Activated CD8-positive, alpha-beta memory T cell treated with anti-CD3 and anti-CD28 coated beads, Interleukin-2, amount 10 ng/mL, durations not matched to agents 7 days and 5 days (primary cell): ENCODE measurements at regions of chr16 and their contacts with region 1.

Region 1: DNA sequence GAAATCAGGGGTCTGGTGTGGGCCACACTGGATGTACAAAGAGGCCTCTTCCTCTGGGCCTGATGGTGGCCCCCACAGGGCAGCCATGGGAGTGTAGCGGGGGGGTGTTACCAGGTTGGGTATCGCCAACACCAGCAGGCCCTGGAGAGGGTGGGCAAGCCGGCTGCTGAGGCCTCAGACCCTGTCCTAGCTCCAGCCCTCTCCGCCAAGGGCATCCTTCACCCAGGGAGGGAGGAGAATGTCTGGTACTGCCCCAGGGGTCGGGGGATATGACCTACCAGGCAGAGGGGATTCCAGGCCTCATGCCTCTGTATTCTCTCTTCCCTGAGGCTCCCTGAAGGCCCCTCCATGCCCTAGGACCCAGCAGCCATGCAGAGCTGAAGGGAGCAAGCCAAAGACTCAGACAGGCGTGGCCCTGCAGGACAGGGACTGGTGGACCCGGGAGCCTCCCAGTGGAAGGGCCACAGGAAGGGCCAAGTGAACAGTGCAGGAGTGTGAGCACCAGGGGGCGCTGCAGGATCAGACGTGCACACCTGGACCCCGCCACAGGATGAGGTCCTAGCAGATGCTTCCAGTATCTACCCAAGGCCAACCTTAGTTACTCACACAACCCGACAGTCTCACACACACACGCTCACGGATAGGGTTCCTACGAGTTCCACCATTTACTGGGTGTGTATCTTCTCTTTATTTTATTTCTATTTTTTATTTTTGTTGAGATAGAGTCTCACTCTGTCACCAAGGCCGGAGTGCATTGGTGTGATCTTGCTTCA is 10.9 kb upstream of the CES4A start:
- DNase-seq: peak; percentile 93
- ATAC-seq: peak; percentile 99
- H3K4me3 Mint-ChIP-seq: no peak overlapping the region
- H3K27ac Mint-ChIP-seq: peak overlapping the region; percentile 75
- H3K4me1 Mint-ChIP-seq: peaks cover 57% of the 10 kb centered on the region
- H3K27me3 Mint-ChIP-seq: no peaks in the 10 kb centered on the region

Region 2: GRCh38 chr16:66774981-66775380 is 202.5 kb before region 1 on chr16:
- CTCF ChIA-PET with region 1: no interaction called
- DNase-seq: no peak
- ATAC-seq: no peak
- H3K4me3 Mint-ChIP-seq: no peak overlapping the region
- H3K27ac Mint-ChIP-seq: no peak overlapping the region
- H3K4me1 Mint-ChIP-seq: no peaks in the 10 kb centered on the region
- H3K27me3 Mint-ChIP-seq: no peaks in the 10 kb centered on the region

Region 3: GRCh38 chr16:66961065-66961744 is 16.3 kb before region 1 on chr16 and contains the start of gene CES3:
- CTCF ChIA-PET with region 1: interaction called, 86 read pairs
- DNase-seq: peak; percentile 84
- ATAC-seq: peak; percentile 96
- H3K4me3 Mint-ChIP-seq: peak within 1 kb of the TSS; percentile 56
- H3K27ac Mint-ChIP-seq: peak within 1 kb of the TSS; percentile 72
- H3K4me1 Mint-ChIP-seq: peaks cover 29% of the 10 kb centered on the region
- H3K27me3 Mint-ChIP-seq: no peaks in the 10 kb centered on the region
- total RNA-seq, gene CES3: 2.3 to 4.5 TPM

Region 4: DNA sequence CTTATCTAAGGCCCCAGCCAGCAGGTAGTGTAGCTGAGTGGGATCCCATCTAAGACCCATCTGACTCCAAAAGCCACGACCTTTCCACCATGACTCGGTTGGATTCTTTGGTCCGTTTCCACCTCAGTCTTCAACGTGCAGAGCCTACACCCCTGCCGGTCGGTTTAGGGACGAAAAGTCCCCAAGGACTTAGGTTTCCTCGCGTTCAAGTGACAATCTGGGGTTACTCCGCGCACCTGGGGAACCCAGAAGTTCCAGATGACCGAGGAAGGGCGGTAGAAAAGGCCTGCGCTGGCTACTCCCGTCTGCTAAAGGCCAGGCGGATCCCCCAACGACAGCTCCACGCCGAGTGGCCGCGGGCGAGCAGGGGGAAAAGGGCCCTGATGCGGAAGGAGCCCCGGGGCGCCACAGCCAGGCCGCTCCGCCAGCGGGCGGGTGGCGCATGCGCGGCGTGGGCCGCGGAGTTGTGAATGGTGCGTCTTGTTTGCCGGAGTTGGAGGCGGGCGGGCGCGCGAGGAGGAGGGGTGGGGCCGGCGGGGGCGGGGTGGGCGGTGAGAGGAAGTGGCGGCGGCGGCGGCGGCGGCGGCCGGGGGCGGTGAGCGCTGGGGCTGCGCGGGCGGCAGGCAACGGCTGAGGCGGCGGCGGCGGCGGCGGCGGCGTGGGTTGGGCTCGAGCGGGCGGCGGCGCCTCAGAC is 51.2 kb after region 1 on chr16 and contains the start of gene CBFB:
- CTCF ChIA-PET with region 1: interaction called, 11 read pairs
- DNase-seq: peak; percentile 95
- ATAC-seq: peak; percentile 94
- H3K4me3 Mint-ChIP-seq: peak within 1 kb of the TSS; percentile 92
- H3K27ac Mint-ChIP-seq: peak within 1 kb of the TSS; percentile 94
- H3K4me1 Mint-ChIP-seq: peaks cover 48% of the 10 kb centered on the region
- H3K27me3 Mint-ChIP-seq: no peaks in the 10 kb centered on the region
- total RNA-seq, gene CBFB: 180 to 196 TPM

Region 5: DNA sequence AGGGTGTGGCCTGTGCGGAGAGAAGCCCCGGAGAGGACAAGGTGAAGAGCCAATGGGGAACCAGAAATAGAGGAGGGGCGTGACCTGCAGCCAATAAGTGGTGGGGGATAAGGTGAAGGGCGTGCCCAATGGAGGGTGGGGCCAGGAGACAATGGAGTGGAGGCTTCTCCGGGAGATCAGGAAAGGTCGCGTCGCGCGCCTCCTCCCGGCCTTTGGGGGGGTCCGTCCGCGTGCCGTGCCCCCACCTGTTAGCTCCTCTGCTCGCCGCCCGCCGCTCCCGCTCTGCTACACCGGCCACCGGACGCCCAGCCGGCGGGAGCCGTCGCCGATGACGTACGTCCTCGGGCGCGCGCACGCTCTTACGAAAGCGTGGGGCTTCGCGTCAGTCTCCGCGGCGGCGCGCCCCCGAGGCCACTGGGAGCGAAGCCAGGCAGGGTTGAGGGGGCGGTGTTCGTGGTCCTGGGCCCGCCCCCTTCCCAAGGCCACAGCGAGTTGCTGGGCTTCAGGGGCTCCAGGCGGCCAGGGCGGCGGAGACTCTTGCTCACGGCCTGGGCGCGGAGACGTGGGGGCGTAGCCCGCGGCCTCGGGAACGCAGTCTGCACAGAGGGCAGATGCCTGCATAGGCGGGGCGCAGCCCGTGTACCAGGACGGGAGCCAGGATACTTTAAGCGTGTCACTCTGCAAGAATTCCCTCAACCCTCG is 206.3 kb after region 1 on chr16 and contains the start of gene MATCAP1:
- CTCF ChIA-PET with region 1: interaction called, 20 read pairs
- DNase-seq: peak; percentile 98
- ATAC-seq: peak; percentile 96
- H3K4me3 Mint-ChIP-seq: peak within 1 kb of the TSS; percentile 31
- H3K27ac Mint-ChIP-seq: no peak within 1 kb of the TSS
- H3K4me1 Mint-ChIP-seq: peaks cover 17% of the 10 kb centered on the region
- H3K27me3 Mint-ChIP-seq: peaks cover 18% of the 10 kb centered on the region
- total RNA-seq, gene MATCAP1: 38.6 to 56.0 TPM